ENCODE measurements at regions of chr5 and their contacts with region 1.

Region 1: DNA sequence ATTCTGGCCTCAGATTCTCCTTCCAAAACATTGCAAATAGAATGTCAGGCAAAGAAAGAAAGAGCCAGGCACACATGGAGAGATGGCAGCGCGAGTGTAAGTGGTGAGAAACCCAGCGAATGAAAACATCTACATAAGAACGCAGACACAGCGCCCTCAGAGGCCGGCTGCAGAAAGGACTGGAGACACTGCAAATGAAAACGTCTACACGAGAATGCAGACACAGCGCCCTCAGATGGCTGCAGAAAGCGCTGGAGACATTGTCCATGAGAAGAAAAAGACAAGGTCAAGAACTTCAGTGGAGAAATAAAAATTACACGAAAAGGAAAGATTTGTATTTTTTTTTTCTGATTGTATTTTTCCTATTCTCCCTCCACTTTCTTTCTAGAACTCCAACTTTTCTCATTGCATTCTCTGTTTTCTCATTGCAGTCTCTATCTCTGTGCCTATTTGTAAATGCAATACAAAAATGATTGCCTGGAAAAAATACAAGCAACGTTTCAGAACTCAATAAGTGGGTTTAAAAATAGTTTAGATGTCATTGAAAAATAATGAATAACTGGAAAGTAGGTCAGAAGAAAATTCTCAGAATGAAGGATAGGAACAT is 117.9 kb upstream of the LPCAT1 start:
- DNase-seq: peak; percentile 88
- H3K4me3 Mint-ChIP-seq: no peak overlapping the region
- H3K27ac Mint-ChIP-seq: no peak overlapping the region
- H3K4me1 Mint-ChIP-seq: peaks cover 18% of the 10 kb centered on the region
- H3K27me3 Mint-ChIP-seq: peaks cover 64% of the 10 kb centered on the region

Region 2: DNA sequence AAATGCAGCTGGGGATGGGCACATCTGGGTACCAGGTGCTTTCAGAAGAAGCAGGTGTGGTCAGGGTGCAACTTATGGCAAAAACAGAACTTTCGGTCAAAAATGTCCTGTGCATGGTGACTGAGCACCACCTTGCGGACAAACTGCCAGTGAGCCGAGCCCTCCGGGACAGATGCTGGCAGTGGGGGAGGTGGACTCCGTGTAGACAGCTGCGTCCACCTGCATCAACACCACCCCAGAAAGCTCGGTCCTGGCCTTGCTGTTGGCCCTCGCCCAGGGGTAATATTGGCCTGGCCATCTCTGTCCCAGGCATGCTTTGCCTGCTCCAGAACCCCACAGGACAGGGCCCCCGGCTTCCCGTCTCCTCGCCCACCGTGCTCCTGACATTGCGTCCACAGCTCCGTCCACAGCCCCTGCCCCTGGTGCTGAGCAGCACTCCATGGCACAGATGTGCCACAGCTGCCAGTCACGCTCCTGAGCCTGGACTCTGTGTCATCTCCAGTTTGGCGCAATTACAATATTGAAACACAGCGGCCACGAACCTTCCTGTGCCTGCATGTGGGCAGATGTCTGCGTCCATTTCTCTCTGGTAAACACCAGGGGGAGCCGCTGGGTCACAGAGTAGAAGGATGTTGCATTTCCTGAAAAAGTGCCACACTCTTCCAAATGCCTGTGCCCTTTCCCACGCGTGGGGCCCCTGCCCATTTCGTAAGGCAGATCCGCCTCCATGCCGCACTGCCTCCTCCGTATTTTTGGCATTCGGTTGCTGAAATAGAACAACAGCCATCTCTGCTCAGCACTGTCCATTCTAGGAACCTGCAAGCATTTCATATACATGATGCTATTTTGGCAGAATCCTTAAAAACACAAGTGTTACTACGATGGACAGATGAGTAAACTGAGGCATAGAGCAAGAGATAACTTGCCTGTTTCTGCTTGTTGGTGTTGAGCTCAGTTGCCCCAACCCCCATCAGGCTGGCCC is 473.6 kb before region 1 on chr5:
- CTCF ChIA-PET with region 1: interaction called, 38 read pairs
- DNase-seq: peak; percentile 83
- H3K4me3 Mint-ChIP-seq: peak overlapping the region; percentile 22
- H3K27ac Mint-ChIP-seq: no peak overlapping the region
- H3K4me1 Mint-ChIP-seq: peaks cover 14% of the 10 kb centered on the region
- H3K27me3 Mint-ChIP-seq: peaks cover 33% of the 10 kb centered on the region

Region 3: DNA sequence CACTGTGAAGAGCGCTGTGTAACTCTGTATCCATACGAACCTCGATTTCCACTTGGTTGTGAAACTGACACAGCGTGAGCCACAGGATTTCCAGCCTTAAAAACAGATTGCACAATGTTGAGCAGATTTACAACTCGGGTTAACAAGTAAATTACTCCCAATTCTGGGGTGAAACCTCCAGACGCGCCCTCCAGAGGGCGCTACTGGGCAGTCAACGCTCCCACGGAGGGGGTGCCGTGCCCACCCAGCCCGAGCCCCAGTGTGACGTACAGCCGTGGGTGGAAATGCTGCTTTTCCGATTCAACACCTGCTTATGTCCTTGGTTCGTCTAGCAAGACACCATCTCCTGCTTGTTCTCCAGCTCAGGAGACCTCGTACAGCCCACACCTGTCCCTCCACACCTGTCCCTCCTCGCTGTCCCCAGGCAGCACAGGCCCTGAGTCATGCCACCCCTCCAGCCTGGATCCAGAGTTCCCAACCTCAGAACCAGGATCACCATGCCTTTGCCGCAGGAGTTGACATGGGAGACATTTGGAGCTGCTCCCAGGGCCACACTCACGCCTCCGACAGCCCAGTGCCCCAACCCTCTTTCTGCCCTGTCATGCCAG is 162.0 kb before region 1 on chr5:
- CTCF ChIA-PET with region 1: interaction called, 27 read pairs
- DNase-seq: peak; percentile 54
- H3K4me3 Mint-ChIP-seq: no peak overlapping the region
- H3K27ac Mint-ChIP-seq: no peak overlapping the region
- H3K4me1 Mint-ChIP-seq: no peaks in the 10 kb centered on the region
- H3K27me3 Mint-ChIP-seq: no peaks in the 10 kb centered on the region

Region 4: DNA sequence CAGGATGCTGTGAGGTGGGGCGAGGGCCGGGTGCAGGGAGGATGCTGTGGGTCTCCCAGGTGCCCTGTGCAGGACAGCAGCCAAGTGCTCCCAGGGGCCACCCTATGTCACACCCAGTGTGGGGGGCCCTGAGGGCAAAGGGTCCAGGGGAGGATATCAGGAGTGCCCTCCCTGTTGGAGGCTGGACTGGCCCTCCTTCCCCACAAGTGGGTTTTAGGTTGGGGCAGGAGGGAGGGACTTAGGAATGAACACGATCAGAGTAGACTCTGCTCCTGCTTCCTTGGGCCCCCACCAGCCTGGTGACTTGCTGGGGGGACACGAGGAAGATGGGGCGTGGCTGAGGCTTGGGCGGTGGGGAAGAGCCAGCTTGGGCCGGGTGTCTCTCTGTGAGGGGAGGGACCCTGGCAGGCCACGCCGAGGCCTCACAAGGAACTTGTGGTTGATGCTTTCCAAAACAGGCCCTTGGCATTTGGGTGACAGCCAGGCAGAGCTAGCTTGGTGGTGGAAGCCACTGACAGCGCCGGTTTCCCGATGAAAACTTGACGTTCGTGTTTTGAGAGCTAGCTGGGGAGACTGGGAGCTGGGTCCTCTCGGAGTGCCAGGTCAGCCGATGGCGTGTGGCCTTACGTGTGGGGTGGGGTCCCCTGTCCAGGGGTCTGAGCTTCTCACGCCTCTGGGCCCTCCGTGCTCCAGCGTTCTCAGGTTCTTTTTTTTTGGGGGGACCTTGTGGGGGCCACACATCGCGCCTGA is 11.1 kb after region 1 on chr5:
- CTCF ChIA-PET with region 1: interaction called, 18 read pairs
- DNase-seq: peak; percentile 21
- H3K4me3 Mint-ChIP-seq: no peak overlapping the region
- H3K27ac Mint-ChIP-seq: no peak overlapping the region
- H3K4me1 Mint-ChIP-seq: peaks cover 8% of the 10 kb centered on the region
- H3K27me3 Mint-ChIP-seq: peaks cover 85% of the 10 kb centered on the region

Measured in activated naive CD4-positive, alpha-beta T cell treated with anti-CD3 and anti-CD28 coated beads, Interleukin-2, amount 10 ng/mL, durations not matched to agents 7 days and 5 days (primary cell).